Activated CD4-positive, alpha-beta memory T cell treated with anti-CD3 and anti-CD28 coated beads for 36 hours (primary cell): ENCODE measurements at regions of chr22 and their contacts with region 1.

Region 1: DNA sequence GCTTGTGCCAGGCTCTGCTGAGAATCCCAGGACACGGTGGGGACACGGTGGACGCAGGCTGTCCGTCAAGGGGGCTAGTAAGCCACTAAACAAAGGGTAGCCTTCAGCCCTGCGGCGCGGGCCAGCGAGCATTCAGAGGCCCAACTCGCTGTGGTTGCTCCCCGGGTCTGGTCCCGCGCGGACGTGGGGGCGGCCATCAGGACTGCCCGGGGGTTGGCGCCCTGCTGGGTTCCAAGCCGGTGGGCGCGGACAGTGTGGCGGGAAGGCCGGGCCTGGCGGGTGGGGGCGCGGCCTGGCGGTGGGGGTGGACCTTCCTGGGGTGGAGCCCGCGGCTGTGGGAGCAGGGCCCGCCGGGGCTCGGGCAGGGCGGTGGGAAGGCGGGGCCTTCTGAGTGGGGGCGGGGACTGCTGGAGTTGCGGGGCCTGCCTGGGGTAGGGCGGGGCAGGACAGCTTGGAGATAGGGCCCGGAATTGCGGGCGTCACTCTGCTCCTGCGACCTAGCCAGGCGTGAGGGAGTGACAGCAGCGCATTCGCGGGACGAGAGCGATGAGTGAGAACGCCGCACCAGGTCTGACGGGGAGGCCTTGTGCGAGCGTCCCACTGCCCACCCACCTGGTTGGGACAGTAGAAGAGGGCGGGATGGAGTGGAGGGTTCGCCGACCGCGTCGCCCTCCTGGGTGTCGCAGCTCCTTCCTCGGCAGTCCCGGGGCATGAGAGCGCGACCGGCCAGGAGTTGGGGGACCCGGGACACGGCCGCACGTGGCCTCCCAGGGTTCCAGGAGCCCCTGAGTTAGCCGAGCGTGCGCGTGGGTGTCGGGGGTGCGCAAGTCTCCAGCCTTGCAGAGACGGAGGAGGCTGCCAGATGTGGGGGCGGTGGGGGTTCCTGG is at the start of gene SERHL2:
- DNase-seq: peak; percentile 90
- H3K4me3 Mint-ChIP-seq: peak within 1 kb of the TSS; percentile 69
- H3K27ac Mint-ChIP-seq: no peak within 1 kb of the TSS
- H3K4me1 Mint-ChIP-seq: peaks cover 11% of the 10 kb centered on the region
- H3K27me3 Mint-ChIP-seq: no peaks in the 10 kb centered on the region
- total RNA-seq, gene SERHL2: 0.83 to 1.2 TPM

Region 2: GRCh38 chr22:42533638-42533977 is 20.1 kb before region 1 on chr22:
- CTCF ChIA-PET with region 1: interaction called, 4 read pairs
- POLR2A ChIA-PET with region 1: no interaction called
- intact Hi-C with region 1: loop called (anchors 2 kb)
- DNase-seq: no peak
- H3K4me3 Mint-ChIP-seq: peak overlapping the region; percentile 71
- H3K27ac Mint-ChIP-seq: peak overlapping the region; percentile 82
- H3K4me1 Mint-ChIP-seq: peaks cover 18% of the 10 kb centered on the region
- H3K27me3 Mint-ChIP-seq: no peaks in the 10 kb centered on the region

Region 3: GRCh38 chr22:42967933-42968332 is 414.2 kb after region 1 on chr22:
- CTCF ChIA-PET with region 1: no interaction called
- POLR2A ChIA-PET with region 1: no interaction called
- intact Hi-C with region 1: no loop called
- DNase-seq: no peak
- H3K4me3 Mint-ChIP-seq: no peak overlapping the region
- H3K27ac Mint-ChIP-seq: no peak overlapping the region
- H3K4me1 Mint-ChIP-seq: peaks cover 45% of the 10 kb centered on the region
- H3K27me3 Mint-ChIP-seq: no peaks in the 10 kb centered on the region

Region 4: DNA sequence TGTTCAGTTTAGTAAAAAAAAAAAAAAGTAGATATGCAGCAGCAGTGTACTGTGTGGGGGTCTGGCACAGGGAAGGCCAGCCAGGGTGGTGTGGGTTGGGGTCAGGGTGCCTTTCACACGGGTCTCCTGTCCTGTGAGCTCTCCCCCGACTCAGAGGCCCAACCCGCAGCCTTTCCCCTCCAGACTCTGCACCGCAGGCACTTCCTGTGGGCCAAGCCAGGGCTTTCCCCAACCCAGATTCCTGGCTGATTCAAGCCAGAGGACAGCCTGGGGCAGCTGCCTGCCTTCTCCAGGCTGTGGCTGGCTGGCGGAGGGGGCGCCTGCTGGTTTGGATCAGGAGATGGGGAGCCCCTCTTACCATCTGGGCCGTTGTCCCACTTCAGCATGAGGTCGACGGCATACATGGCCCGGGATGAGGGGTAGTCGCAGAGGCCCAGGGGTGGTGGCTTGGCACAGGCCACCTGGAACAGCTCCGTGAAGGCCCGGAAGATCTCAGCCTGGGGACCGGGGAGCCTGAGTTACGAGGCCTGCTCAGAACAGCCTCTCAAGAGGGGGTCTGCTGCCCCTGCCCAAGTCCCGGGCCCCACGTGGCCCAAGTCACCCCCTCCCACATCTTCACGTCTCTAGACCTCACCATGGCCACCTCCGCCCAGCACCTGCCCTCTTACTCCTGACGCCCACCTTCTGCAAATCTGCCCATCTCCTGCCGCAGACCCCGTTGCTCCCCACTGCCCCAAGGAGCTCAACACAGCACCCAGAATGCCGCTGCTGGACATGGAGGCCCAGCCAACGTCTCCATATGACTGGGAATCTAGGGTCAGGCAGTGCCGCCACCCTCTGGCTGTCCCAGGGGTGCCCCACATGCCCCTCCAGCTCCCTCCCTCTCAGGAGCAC is 614.9 kb after region 1 on chr22:
- CTCF ChIA-PET with region 1: no interaction called
- POLR2A ChIA-PET with region 1: no interaction called
- intact Hi-C with region 1: no loop called
- DNase-seq: no peak
- H3K4me3 Mint-ChIP-seq: no peak overlapping the region
- H3K27ac Mint-ChIP-seq: no peak overlapping the region
- H3K4me1 Mint-ChIP-seq: no peaks in the 10 kb centered on the region
- H3K27me3 Mint-ChIP-seq: no peaks in the 10 kb centered on the region